ENCODE measurements at regions of chr11 and their contacts with region 1.

Region 1: GRCh38 chr11:18492888-18493287 is 33.9 kb downstream of the TSG101 start:
- DNase-seq: no peak
- ATAC-seq: no peak
- H3K4me3 ChIP-seq: no peak overlapping the region
- H3K27ac ChIP-seq: no peak overlapping the region
- H3K4me1 ChIP-seq: peaks cover 0 to 4% (median 0%) of the 10 kb centered on the region in 12 donors
- H3K27me3 ChIP-seq: no peaks in the 10 kb centered on the region
- CTCF ChIP-seq: no peak
- POLR2A ChIP-seq: no peak

Region 2: GRCh38 chr11:18253231-18253630 is 239.7 kb before region 1 on chr11:
- intact Hi-C with region 1: no loop called
- DNase-seq: no peak
- ATAC-seq: no peak
- H3K4me3 ChIP-seq: no peak overlapping the region
- H3K27ac ChIP-seq: no peak overlapping the region
- H3K4me1 ChIP-seq: no peaks in the 10 kb centered on the region
- H3K27me3 ChIP-seq: peaks cover 0 to 6% (median 0%) of the 10 kb centered on the region in 9 donors
- CTCF ChIP-seq: no peak
- POLR2A ChIP-seq: no peak

Region 3: GRCh38 chr11:18352581-18352980 is 140.3 kb before region 1 on chr11:
- intact Hi-C with region 1: loop called in 1 of 10 experiments (anchors 10 kb)
- DNase-seq: no peak
- ATAC-seq: no peak
- H3K4me3 ChIP-seq: no peak overlapping the region
- H3K27ac ChIP-seq: no peak overlapping the region
- H3K4me1 ChIP-seq: no peaks in the 10 kb centered on the region
- H3K27me3 ChIP-seq: no peaks in the 10 kb centered on the region
- CTCF ChIP-seq: no peak
- POLR2A ChIP-seq: no peak

Measured in heart left ventricle (tissue), 16 donors.